ENCODE measurements at regions of chr7 and their contacts with region 1.

Region 1: GRCh38 chr7:123865517-123866117 is 20.6 kb downstream of the HYAL4 start:
- DNase-seq: no peak
- H3K4me3 ChIP-seq: no peak overlapping the region
- H3K27ac ChIP-seq: no peak overlapping the region
- H3K4me1 ChIP-seq: peaks cover 0 to 2% (median 1%) of the 10 kb centered on the region in 4 experiments; a peak in 1 of 7 replicates
- H3K27me3 ChIP-seq: no peaks in the 10 kb centered on the region
- CTCF ChIP-seq: peak in 2 of 3 experiments; percentile 61 to 68; a peak in 3 of 4 replicates
- EP300 ChIP-seq: no peak
- POLR2A ChIP-seq: no peak
- RAD21 ChIP-seq: peak; percentile 68 to 69

Region 2: DNA sequence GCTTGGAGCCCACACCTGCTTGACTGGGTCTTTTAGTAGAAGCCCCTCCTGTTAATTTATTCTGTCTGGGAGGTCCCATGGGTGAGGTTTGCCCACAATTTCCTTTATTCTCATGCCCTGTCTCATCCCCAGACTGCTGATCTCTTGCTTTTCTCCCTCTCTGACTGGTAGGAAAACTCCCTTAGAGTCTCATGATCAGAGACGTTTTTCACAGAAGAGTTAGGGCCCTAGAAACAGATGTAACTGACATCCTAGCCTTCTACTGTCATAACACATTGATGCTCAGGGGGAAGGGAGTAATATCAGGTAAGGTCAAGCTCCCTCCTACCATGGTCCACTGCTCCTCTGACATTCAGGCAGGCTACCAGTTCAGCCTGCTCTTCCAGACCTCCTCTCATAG is 73.1 kb before region 1 on chr7:
- CTCF ChIA-PET with region 1: interaction called, 71 read pairs
- POLR2A ChIA-PET with region 1: no interaction called
- DNase-seq: no peak
- H3K4me3 ChIP-seq: no peak overlapping the region
- H3K27ac ChIP-seq: no peak overlapping the region
- H3K4me1 ChIP-seq: no peaks in the 10 kb centered on the region
- H3K27me3 ChIP-seq: no peaks in the 10 kb centered on the region
- CTCF ChIP-seq: no peak
- EP300 ChIP-seq: no peak
- POLR2A ChIP-seq: no peak
- RAD21 ChIP-seq: no peak

Region 3: DNA sequence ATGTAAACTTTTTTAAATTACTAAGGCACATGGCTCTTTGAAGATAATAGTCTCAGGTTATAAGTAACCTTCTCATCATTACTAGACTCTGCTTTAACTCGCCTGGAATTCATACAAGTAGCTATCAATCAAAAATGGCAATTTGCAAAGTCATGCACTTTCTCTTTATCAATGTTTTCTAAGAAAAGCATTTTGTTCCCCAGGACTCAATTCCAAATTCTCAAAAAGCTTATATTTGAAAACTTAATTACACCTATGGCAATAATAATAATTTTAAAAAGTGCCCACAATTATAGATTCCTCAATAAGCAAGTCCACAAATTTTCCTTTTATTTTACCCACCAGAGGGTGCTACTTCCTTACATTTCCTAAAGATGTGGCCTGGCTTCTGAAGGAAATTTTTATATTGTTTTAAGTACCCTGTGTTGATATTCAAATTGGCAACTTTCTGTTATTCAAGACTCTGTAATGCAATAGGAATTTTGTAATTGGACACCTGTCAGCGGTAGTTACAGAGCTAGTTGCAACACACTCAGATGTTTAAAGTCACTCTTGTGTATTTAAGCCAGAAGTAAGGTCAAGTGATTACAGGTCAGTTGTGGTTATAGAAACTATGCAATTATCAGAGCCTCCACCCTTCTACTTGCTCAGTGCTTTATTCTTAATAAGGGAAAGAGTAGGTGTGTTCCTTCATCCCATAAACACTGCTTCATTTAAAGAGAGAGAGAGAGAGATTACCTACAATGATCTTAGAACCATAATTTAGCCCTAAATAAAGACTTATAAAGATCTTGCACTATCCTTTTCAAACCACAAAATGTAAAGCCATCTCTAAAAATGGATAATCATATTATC is 67.7 kb before region 1 on chr7:
- CTCF ChIA-PET with region 1: interaction called, 71 read pairs
- POLR2A ChIA-PET with region 1: no interaction called
- DNase-seq: peak in 1 of 2 experiments; percentile 31
- H3K4me3 ChIP-seq: no peak overlapping the region
- H3K27ac ChIP-seq: no peak overlapping the region
- H3K4me1 ChIP-seq: peaks cover 0 to 3% (median 1%) of the 10 kb centered on the region in 4 experiments; a peak in 2 of 7 replicates
- H3K27me3 ChIP-seq: no peaks in the 10 kb centered on the region
- CTCF ChIP-seq: peak in 2 of 3 experiments; percentile 28 to 46; a peak in 2 of 4 replicates
- EP300 ChIP-seq: no peak
- POLR2A ChIP-seq: no peak
- RAD21 ChIP-seq: peak; percentile 72 to 79

Region 4: DNA sequence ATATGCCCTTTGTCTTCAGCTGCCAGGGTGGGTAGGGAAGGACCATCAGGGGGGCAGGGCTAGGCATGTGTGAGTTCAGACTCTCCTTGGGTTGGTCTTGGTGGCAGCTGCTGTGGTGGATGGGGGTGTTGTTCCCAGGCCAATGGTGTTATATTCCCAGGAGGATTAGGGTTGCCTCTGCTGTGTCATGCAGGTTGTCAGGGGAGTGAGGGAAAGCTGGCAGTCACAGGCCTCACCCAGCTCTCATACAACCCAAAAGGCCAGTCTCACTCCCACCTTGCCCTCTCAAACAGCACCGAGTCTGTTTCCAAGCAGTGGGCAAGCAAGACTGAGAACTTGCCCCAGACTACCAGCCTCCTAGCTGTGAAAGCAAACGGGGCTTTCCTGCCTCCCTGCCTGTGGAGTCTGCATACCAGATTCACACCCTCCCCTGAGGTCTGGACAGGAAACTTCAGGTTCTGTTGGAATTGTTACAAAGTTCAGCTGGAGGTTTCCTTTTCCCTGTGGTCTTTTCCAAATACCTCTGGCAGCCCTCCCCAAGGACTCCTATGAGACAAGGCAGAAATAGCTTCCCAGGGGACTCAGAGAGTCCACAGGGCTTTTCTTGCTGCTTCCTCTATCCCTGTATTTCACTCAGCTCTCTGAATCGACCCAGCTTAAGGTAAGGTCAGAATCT is 19.3 kb before region 1 on chr7:
- CTCF ChIA-PET with region 1: interaction called, 31 read pairs
- POLR2A ChIA-PET with region 1: no interaction called
- DNase-seq: no peak
- H3K4me3 ChIP-seq: no peak overlapping the region
- H3K27ac ChIP-seq: no peak overlapping the region
- H3K4me1 ChIP-seq: no peaks in the 10 kb centered on the region
- H3K27me3 ChIP-seq: no peaks in the 10 kb centered on the region
- CTCF ChIP-seq: no peak
- EP300 ChIP-seq: no peak
- POLR2A ChIP-seq: no peak
- RAD21 ChIP-seq: no peak

Region 5: GRCh38 chr7:123935374-123936075 is 69.9 kb after region 1 on chr7:
- CTCF ChIA-PET with region 1: no interaction called
- POLR2A ChIA-PET with region 1: no interaction called
- DNase-seq: no peak
- H3K4me3 ChIP-seq: no peak overlapping the region
- H3K27ac ChIP-seq: no peak overlapping the region
- H3K4me1 ChIP-seq: no peaks in the 10 kb centered on the region
- H3K27me3 ChIP-seq: no peaks in the 10 kb centered on the region
- CTCF ChIP-seq: no peak
- EP300 ChIP-seq: no peak
- POLR2A ChIP-seq: no peak
- RAD21 ChIP-seq: no peak